Common myeloid progenitor, CD34-positive (primary cell): ENCODE measurements at regions of chr7 and their contacts with region 1.

Region 1: GRCh38 chr7:134432296-134433152 is 26.4 kb downstream of the AKR1B1 start:
- DNase-seq: peak; percentile 88 to 93 (median 91)
- H3K4me3 ChIP-seq: peak overlapping the region; percentile 15 to 76 (median 50)
- H3K27ac ChIP-seq: no peak overlapping the region
- H3K4me1 ChIP-seq: peaks cover 0 to 12% (median 9%) of the 10 kb centered on the region in 4 experiments
- H3K27me3 ChIP-seq: no peaks in the 10 kb centered on the region

Region 2: DNA sequence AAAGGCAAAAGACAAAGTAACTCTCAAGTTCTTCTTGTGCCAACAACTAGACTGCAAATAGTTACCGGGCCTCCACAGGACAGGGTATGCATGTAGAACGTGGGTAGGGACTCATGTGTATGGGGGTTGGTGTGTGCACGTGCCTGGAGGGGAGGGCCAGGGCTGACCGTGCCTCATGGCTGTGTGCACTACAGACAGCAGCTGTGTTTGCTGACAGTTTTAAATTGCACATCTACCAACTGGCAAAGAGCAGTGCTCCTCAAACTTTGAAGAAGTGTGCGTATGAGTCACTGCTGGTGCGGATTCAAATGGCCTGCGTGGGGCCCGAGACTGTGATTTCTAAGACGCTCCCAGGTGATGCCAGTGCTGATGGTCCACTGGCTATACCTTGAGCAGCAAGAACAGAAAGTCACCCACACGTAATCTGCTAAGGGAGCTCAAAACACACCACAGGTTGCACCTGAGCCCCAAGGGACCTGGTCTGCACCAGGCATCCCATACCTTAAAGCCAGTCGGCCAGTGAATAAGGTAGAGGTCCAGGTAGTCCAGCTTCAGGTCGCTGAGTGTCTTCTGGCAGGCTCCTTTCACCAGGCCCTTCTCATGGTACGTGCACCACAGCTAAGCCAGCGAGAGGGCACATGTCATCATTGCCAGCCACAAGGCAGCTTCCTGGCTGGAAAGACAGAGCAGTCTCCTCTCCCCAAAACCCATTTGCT is 17.9 kb after region 1 on chr7:
- CTCF ChIA-PET with region 1: interaction called, 25 read pairs
- POLR2A ChIA-PET with region 1: no interaction called
- DNase-seq: no peak
- H3K4me3 ChIP-seq: no peak overlapping the region
- H3K27ac ChIP-seq: no peak overlapping the region
- H3K4me1 ChIP-seq: peaks cover 2 to 49% (median 29%) of the 10 kb centered on the region in 4 experiments
- H3K27me3 ChIP-seq: no peaks in the 10 kb centered on the region

Region 3: DNA sequence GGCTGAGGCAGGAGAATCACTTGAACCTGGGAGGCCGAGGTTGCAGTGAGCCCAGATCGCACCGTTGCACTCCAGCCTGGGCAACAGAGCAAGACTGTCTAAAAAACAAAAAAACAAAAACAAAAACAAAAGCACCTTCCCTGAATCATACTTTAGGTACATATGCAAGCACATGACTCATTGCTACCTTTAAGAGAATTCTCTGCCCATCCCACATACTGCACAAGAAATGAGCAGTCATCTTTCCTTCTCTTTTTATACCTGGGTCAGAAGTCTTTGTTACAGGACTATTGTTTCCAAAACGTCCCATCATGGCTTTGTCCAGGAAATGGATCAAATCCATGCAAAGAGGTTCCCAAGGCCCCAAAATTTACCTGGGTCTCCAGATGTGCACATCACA is 73.3 kb after region 1 on chr7:
- CTCF ChIA-PET with region 1: interaction called, 96 read pairs
- POLR2A ChIA-PET with region 1: no interaction called
- DNase-seq: no peak
- H3K4me3 ChIP-seq: no peak overlapping the region
- H3K27ac ChIP-seq: no peak overlapping the region
- H3K4me1 ChIP-seq: no peaks in the 10 kb centered on the region
- H3K27me3 ChIP-seq: no peaks in the 10 kb centered on the region

Region 4: GRCh38 chr7:134547397-134548054 is 115.0 kb after region 1 on chr7:
- CTCF ChIA-PET with region 1: interaction called, 19 read pairs
- POLR2A ChIA-PET with region 1: no interaction called
- DNase-seq: peak; percentile 45 to 68 (median 65)
- H3K4me3 ChIP-seq: peak overlapping the region in 2 of 7 experiments; percentile 34 to 43
- H3K27ac ChIP-seq: no peak overlapping the region
- H3K4me1 ChIP-seq: peaks cover 0 to 4% (median 0%) of the 10 kb centered on the region in 4 experiments
- H3K27me3 ChIP-seq: peaks cover 0 to 5% (median 0%) of the 10 kb centered on the region in 5 experiments

Region 5: DNA sequence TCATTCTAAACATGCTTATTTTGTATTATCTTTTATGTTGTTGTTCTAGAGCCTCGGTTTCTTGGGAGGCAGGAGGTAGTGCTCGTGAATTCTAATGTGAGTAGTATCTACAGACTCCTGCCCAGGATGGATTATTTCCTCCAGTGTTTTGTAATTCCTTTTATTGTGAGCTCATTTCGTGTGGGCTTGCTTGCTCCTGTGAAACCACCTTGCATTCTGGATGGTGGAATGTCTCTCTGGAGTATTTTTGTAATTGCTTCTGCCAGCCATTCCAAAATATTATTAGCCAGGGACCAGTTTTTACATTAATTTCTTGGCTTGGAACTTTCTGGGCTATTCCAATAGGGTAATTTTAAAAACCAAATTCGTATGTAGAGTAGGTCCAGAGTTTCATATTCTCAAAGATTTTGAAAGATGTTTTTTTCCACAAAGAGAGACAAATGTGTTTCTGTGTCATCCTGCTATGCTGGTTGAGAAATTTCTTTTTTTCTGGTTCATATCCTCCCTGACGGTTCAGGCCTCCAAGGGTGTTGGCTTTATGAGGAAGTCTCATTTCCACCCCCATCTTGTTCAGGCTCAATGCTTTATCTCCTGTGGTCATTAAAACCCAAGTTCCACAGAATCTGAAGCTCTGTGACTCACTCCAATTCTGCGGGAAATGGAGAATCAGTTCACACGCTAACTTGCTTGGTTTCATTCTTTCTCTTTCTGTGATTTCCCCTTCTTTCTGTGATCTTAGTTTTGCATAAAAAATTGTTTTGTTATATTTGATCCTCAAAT is 305.2 kb after region 1 on chr7:
- CTCF ChIA-PET with region 1: no interaction called
- POLR2A ChIA-PET with region 1: no interaction called
- DNase-seq: peak in 2 of 3 donors; percentile 19 to 39
- H3K4me3 ChIP-seq: no peak overlapping the region
- H3K27ac ChIP-seq: no peak overlapping the region
- H3K4me1 ChIP-seq: no peaks in the 10 kb centered on the region
- H3K27me3 ChIP-seq: no peaks in the 10 kb centered on the region